Activated T-helper 1 cell treated with anti-CD3 and anti-CD28 coated beads, Interleukin-12 subunit alpha, Interleukin-12 subunit beta, Interleukin-2, Interleukin-4 antibody, amounts not matched to agents 30 ng/mL and 10 ng/mL and 1 ng/mL, durations not matched to agents 14 hours and 24 hours and 36 hours (primary cell): ENCODE measurements at regions of chr11 and their contacts with region 1.

Region 1: DNA sequence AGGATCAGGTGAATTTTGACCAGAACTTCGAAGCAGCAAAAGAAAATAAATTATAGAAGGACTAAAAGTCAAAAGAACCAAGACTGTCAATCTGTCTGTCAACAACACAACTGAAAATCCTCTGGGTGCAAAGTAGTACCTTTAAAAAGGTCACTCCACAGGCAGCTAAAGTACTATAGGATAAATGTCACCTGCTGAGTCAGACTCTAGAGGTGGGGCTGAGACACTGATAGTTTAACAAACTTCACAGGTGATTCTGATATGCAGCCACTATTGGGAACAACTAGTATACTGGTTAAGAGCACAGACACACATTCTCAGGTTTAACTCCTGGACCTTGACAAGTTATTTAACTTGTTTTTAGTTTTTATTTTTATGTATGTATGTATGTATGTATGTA is 107.3 kb downstream of the FCHSD2 start:
- DNase-seq: no peak
- H3K4me3 Mint-ChIP-seq: peak overlapping the region; percentile 45
- H3K27ac Mint-ChIP-seq: peak overlapping the region; percentile 83
- H3K4me1 Mint-ChIP-seq: peaks cover 21% of the 10 kb centered on the region
- H3K27me3 Mint-ChIP-seq: no peaks in the 10 kb centered on the region

Region 2: GRCh38 chr11:72712168-72712751 is 322.5 kb before region 1 on chr11:
- intact Hi-C with region 1: no loop called
- DNase-seq: no peak
- H3K4me3 Mint-ChIP-seq: no peak overlapping the region
- H3K27ac Mint-ChIP-seq: peak overlapping the region; percentile 16
- H3K4me1 Mint-ChIP-seq: no peaks in the 10 kb centered on the region
- H3K27me3 Mint-ChIP-seq: no peaks in the 10 kb centered on the region

Region 3: DNA sequence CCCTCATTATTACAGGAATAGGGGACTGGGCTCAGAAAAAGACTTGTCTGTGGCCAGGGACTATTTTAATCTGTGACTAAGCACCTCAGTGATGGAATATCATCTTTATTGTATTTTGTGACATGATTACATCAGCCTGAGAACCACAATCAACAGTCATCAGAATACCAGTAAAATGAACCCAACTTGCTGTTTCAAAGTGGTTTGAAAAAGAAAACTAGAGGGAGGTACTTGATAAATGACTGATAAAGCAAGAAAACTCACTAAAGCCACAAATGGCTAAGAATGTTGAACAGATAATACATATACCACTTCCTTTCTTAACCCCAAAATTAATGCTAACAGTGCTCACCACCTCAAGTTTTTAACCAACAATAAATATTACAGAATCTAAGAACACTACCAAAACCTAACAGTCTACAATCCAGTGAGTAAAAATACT is 64.9 kb before region 1 on chr11:
- intact Hi-C with region 1: loop called (anchors 1 kb)
- DNase-seq: no peak
- H3K4me3 Mint-ChIP-seq: peak overlapping the region; percentile 48
- H3K27ac Mint-ChIP-seq: peak overlapping the region; percentile 79
- H3K4me1 Mint-ChIP-seq: peaks cover 78% of the 10 kb centered on the region
- H3K27me3 Mint-ChIP-seq: no peaks in the 10 kb centered on the region

Region 4: GRCh38 chr11:72975778-72976521 is 58.8 kb before region 1 on chr11:
- intact Hi-C with region 1: loop called (anchors 1 kb)
- DNase-seq: no peak
- H3K4me3 Mint-ChIP-seq: no peak overlapping the region
- H3K27ac Mint-ChIP-seq: peak overlapping the region; percentile 8
- H3K4me1 Mint-ChIP-seq: peaks cover 62% of the 10 kb centered on the region
- H3K27me3 Mint-ChIP-seq: no peaks in the 10 kb centered on the region

Region 5: GRCh38 chr11:73047773-73048371 is 13.1 kb after region 1 on chr11:
- intact Hi-C with region 1: loop called (anchors 2 kb)
- DNase-seq: no peak
- H3K4me3 Mint-ChIP-seq: peak overlapping the region; percentile 23
- H3K27ac Mint-ChIP-seq: peak overlapping the region; percentile 50
- H3K4me1 Mint-ChIP-seq: peaks cover 18% of the 10 kb centered on the region
- H3K27me3 Mint-ChIP-seq: no peaks in the 10 kb centered on the region

Region 6: GRCh38 chr11:73072901-73073481 is 38.2 kb after region 1 on chr11:
- intact Hi-C with region 1: loop called (anchors 2 kb)
- DNase-seq: no peak
- H3K4me3 Mint-ChIP-seq: no peak overlapping the region
- H3K27ac Mint-ChIP-seq: peak overlapping the region; percentile 22
- H3K4me1 Mint-ChIP-seq: peaks cover 31% of the 10 kb centered on the region
- H3K27me3 Mint-ChIP-seq: no peaks in the 10 kb centered on the region

Region 7: GRCh38 chr11:73995247-73995646 is 960.5 kb after region 1 on chr11:
- intact Hi-C with region 1: loop called (anchors 10 kb)
- DNase-seq: no peak
- H3K4me3 Mint-ChIP-seq: peak overlapping the region; percentile 45
- H3K27ac Mint-ChIP-seq: peak overlapping the region; percentile 94
- H3K4me1 Mint-ChIP-seq: peaks cover 59% of the 10 kb centered on the region
- H3K27me3 Mint-ChIP-seq: no peaks in the 10 kb centered on the region